CD8-positive, alpha-beta T cell (primary cell): ENCODE measurements at regions of chr5 and their contacts with region 1.

Region 1: GRCh38 chr5:88690409-88691229 is 192.4 kb downstream of the MEF2C start:
- DNase-seq: peak; percentile 29 to 76 (median 63)
- ATAC-seq: peak; percentile 90
- H3K4me3 ChIP-seq: peak overlapping the region in 1 of 2 experiments; percentile 20
- H3K4me3 Mint-ChIP-seq: peak overlapping the region; percentile 74
- H3K27ac ChIP-seq: no peak overlapping the region
- H3K27ac Mint-ChIP-seq: no peak overlapping the region
- H3K4me1 ChIP-seq: peaks cover 14% of the 10 kb centered on the region
- H3K4me1 Mint-ChIP-seq: peaks cover 16% of the 10 kb centered on the region
- H3K27me3 ChIP-seq: peaks cover 56 to 60% of the 10 kb centered on the region in 2 experiments
- H3K27me3 Mint-ChIP-seq: peaks cover 91% of the 10 kb centered on the region
- CTCF ChIP-seq: peak; percentile 89

Region 2: GRCh38 chr5:87419966-87420365 is 1270.7 kb before region 1 on chr5:
- CTCF ChIA-PET with region 1: no interaction called
- POLR2A ChIA-PET with region 1: no interaction called
- intact Hi-C with region 1: loop called in 1 of 2 experiments (anchors 5 kb)
- DNase-seq: no peak
- ATAC-seq: no peak
- H3K4me3 ChIP-seq: no peak overlapping the region
- H3K4me3 Mint-ChIP-seq: no peak overlapping the region
- H3K27ac ChIP-seq: no peak overlapping the region
- H3K27ac Mint-ChIP-seq: no peak overlapping the region
- H3K4me1 ChIP-seq: no peaks in the 10 kb centered on the region
- H3K4me1 Mint-ChIP-seq: no peaks in the 10 kb centered on the region
- H3K27me3 ChIP-seq: no peaks in the 10 kb centered on the region
- H3K27me3 Mint-ChIP-seq: no peaks in the 10 kb centered on the region
- CTCF ChIP-seq: no peak

Region 3: GRCh38 chr5:87780831-87781760 is 909.5 kb before region 1 on chr5:
- CTCF ChIA-PET with region 1: interaction called, 136 read pairs
- POLR2A ChIA-PET with region 1: no interaction called
- intact Hi-C with region 1: loop called (anchors 1 kb)
- DNase-seq: peak; percentile 46 to 86 (median 77)
- ATAC-seq: peak; percentile 99
- H3K4me3 ChIP-seq: no peak overlapping the region
- H3K4me3 Mint-ChIP-seq: no peak overlapping the region
- H3K27ac ChIP-seq: no peak overlapping the region
- H3K27ac Mint-ChIP-seq: no peak overlapping the region
- H3K4me1 ChIP-seq: no peaks in the 10 kb centered on the region
- H3K4me1 Mint-ChIP-seq: no peaks in the 10 kb centered on the region
- H3K27me3 ChIP-seq: peaks cover 3 to 8% of the 10 kb centered on the region in 2 experiments
- H3K27me3 Mint-ChIP-seq: peaks cover 17% of the 10 kb centered on the region
- CTCF ChIP-seq: peak; percentile 81

Region 4: DNA sequence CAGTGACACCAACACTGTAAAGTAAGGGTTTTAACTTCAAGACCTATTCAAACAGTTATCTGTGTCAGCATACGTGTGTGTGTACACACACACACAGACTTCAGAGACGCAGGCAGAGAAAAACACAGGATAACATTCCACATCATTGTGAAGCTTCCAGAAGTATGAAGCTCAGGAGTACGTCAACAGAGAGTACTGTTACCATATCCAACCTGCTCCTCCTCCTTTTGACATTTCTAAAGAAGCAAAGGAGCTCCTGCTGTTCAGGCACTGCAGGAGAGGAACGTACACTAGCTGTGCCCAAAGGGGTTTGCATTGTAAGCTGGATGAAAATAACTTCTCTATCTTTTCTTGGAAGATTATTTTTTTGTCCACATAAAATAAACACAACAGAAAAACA is 11.7 kb after region 1 on chr5:
- CTCF ChIA-PET with region 1: interaction called, 13 read pairs
- POLR2A ChIA-PET with region 1: no interaction called
- intact Hi-C with region 1: no loop called
- DNase-seq: no peak
- ATAC-seq: no peak
- H3K4me3 ChIP-seq: no peak overlapping the region
- H3K4me3 Mint-ChIP-seq: no peak overlapping the region
- H3K27ac ChIP-seq: no peak overlapping the region
- H3K27ac Mint-ChIP-seq: no peak overlapping the region
- H3K4me1 ChIP-seq: no peaks in the 10 kb centered on the region
- H3K4me1 Mint-ChIP-seq: no peaks in the 10 kb centered on the region
- H3K27me3 ChIP-seq: peaks cover 3 to 5% of the 10 kb centered on the region in 2 experiments
- H3K27me3 Mint-ChIP-seq: peaks cover 39% of the 10 kb centered on the region
- CTCF ChIP-seq: no peak